ENCODE measurements at regions of chr11 and their contacts with region 1.

Region 1: DNA sequence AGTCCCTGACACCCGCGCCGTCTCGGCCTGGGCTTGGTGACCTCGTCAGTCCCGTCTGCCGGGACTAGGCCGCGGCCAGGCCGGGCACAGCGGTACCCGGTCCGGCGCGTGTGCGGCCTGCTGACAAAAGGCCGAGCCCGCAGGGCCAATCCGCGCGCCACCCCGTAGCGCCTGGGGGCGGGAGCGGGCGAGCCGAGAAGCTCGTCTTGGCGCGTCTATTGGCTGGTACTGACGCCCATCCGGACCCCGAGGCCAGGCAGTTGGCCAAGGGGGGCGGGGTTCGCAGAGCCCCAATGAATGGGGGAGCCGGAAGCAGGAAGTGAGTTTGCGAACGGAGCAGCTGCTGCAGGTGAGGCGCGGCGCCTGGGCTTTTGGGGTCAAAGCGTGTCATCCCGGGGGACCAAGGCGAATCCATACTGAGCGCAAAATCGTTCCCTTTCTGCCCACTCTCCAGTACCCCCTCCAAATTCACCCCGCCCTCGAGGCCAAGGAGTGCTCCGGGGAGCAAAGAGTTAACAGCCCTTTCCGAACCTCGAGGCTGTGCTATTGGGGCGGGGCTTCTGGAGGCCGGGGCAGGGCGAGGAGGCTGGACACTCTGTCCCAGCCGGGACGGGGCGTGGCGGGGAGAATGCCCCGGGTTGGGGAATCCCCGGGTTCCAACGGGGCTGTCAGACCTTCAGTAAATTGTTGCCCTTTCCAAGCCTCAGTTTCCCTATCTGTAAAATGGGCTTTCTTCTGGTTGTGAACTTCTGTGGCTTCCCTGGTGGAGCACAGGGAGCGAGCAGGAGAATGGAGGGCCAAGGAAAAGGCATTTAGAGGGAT is at the start of gene DPP3:
- DNase-seq: peak; percentile 84
- ATAC-seq: peak; percentile 98
- H3K4me3 ChIP-seq: peak within 1 kb of the TSS; percentile 95
- H3K27ac ChIP-seq: peak within 1 kb of the TSS; percentile 89
- H3K4me1 ChIP-seq: peaks cover 6% of the 10 kb centered on the region
- H3K27me3 ChIP-seq: no peaks in the 10 kb centered on the region
- CTCF ChIP-seq: no peak
- EP300 ChIP-seq: peak in 1 of 2 experiments; percentile 40; a peak in 1 of 4 replicates
- POLR2A ChIP-seq: peak; percentile 94
- RAD21 ChIP-seq: no peak
- polyA plus RNA-seq, gene DPP3: 6.0 to 6.3 TPM

Region 2: DNA sequence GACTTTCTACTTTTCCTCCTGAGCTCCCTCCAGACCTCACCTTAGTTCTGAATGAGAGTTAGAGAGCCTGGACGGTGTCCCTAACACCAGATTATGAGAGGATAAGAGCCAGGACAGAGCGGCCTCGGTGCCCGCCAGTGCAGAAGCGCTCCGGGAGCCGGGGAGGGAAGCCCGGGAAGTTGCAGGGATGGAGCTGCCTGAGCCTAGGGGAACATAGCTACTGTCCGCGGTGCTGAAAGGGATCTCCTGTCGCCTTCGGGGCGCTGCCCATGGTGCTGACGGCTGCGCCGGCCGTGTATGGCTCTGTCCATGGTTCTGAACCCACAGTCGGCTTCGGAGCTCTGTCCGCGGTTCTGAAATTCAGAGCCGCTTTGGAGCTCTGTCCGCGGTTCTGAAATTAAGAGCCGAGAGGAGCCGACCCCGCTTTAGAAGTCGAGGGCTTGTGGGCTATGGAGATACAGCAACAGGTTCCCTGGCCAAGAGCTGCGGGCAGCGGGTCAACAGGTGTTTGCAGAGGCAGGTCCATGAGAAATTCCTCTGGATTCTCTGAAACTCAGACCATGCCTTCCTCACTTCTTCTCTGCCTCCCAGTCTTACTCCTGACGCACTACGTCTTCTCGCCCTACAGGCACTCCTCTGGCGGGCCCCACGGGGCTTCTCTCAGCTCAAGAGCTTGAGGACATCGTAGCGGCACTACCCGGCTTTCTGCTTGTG is 58.7 kb before region 1 on chr11:
- CTCF ChIA-PET with region 1: interaction called, 13 read pairs
- POLR2A ChIA-PET with region 1: interaction called, 3 read pairs
- RAD21 ChIA-PET with region 1: interaction called, 11 read pairs
- SMC1A ChIA-PET with region 1: interaction called, 3 read pairs
- in situ Hi-C with region 1: no loop called
- intact Hi-C with region 1: no loop called
- DNase-seq: peak; percentile 37
- ATAC-seq: peak; percentile 57
- H3K4me3 ChIP-seq: no peak overlapping the region
- H3K27ac ChIP-seq: no peak overlapping the region
- H3K4me1 ChIP-seq: peaks cover 3% of the 10 kb centered on the region; the same call in 1 of the 2 replicates
- H3K27me3 ChIP-seq: peaks cover 0 to 8% of the 10 kb centered on the region in 2 experiments; a peak in 1 of 4 replicates
- CTCF ChIP-seq: no peak
- EP300 ChIP-seq: no peak
- POLR2A ChIP-seq: no peak
- RAD21 ChIP-seq: no peak

Region 3: GRCh38 chr11:66429983-66430602 is 50.2 kb before region 1 on chr11:
- CTCF ChIA-PET with region 1: interaction called, 21 read pairs
- POLR2A ChIA-PET with region 1: no interaction called
- RAD21 ChIA-PET with region 1: interaction called, 3 read pairs
- SMC1A ChIA-PET with region 1: no interaction called
- in situ Hi-C with region 1: no loop called
- intact Hi-C with region 1: no loop called
- DNase-seq: no peak
- ATAC-seq: peak; percentile 93
- H3K4me3 ChIP-seq: no peak overlapping the region
- H3K27ac ChIP-seq: no peak overlapping the region
- H3K4me1 ChIP-seq: no peaks in the 10 kb centered on the region
- H3K27me3 ChIP-seq: no peaks in the 10 kb centered on the region
- CTCF ChIP-seq: peak; percentile 78 to 88 (median 79)
- EP300 ChIP-seq: no peak
- POLR2A ChIP-seq: no peak
- RAD21 ChIP-seq: peak; percentile 68

Region 4: GRCh38 chr11:66438504-66439466 is 41.5 kb before region 1 on chr11 and contains the start of gene MRPL11:
- CTCF ChIA-PET with region 1: interaction called, 39 read pairs
- POLR2A ChIA-PET with region 1: interaction called, 4 read pairs
- RAD21 ChIA-PET with region 1: interaction called, 23 read pairs
- SMC1A ChIA-PET with region 1: interaction called, 6 read pairs
- in situ Hi-C with region 1: no loop called
- intact Hi-C with region 1: loop called (anchors 1 kb)
- DNase-seq: peak; percentile 95
- ATAC-seq: peak; percentile 99
- H3K4me3 ChIP-seq: peak within 1 kb of the TSS; percentile 98
- H3K27ac ChIP-seq: peak within 1 kb of the TSS; percentile 85
- H3K4me1 ChIP-seq: no peaks in the 10 kb centered on the region
- H3K27me3 ChIP-seq: no peaks in the 10 kb centered on the region; a peak in 1 of 4 replicates
- CTCF ChIP-seq: peak; percentile 66 to 91 (median 87)
- EP300 ChIP-seq: no peak
- POLR2A ChIP-seq: peak; percentile 82
- RAD21 ChIP-seq: peak; percentile 37; the same call in 1 of the 2 replicates
- polyA plus RNA-seq, gene MRPL11: 43.5 to 80.9 TPM